GM23248 (cell line): ENCODE measurements at regions of chr9 and their contacts with region 1.

Region 1: GRCh38 chr9:126228781-126229444 is 97.7 kb upstream of the MVB12B start:
- DNase-seq: peak; percentile 84
- H3K4me3 ChIP-seq: no peak overlapping the region
- H3K27ac ChIP-seq: no peak overlapping the region
- H3K4me1 ChIP-seq: no peaks in the 10 kb centered on the region
- H3K27me3 ChIP-seq: peaks cover 24% of the 10 kb centered on the region

Region 2: DNA sequence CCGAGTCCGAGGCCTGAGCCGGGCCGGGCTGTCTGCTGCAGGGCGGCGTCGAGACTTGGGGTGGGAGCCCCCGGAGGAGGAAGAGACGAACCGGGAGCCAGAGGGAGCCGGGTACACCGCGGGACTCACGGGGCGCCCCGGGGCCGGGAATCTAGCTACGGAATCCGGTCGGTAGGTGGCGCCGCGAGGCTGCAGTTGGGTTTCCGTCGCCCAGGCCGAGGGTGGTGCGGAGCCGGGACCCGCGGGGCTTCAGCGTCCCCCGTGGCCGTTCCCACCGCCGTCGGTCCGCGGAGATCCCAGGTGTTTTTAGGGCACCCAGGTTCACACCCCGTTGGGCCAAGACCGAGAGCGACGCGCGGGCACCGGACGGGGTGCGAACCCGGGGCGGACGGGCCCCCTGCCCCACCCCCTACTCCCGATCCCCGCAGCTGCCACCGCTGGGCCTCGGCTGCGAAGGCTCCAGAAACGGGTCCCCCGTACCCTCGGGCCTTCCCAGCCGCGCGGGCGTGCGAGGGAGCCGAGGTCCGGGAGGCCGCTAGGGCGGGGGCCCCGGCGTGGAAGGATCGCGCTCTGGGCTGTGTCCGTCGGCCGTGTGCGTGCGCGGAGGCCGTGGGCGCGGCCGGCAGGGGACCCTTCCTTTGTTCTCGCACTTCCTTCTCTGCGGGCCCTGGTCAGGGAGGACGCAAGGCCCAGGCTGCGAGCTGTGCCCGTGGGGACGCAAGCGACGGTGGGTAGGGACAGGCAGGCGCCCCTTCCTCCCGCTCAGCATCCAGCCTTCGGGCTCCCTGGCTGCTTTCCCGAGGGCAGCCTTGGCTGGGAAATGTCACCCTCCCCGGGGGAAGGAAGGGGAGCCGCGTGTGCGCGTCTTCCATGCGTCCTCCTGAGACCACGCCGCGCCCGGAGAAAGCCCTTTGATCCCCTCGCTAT is 820.7 kb before region 1 on chr9:
- in situ Hi-C with region 1: loop called (anchors 10 kb)
- DNase-seq: peak; percentile 88
- H3K4me3 ChIP-seq: peak overlapping the region; percentile 73
- H3K27ac ChIP-seq: no peak overlapping the region
- H3K4me1 ChIP-seq: no peaks in the 10 kb centered on the region
- H3K27me3 ChIP-seq: no peaks in the 10 kb centered on the region

Region 3: DNA sequence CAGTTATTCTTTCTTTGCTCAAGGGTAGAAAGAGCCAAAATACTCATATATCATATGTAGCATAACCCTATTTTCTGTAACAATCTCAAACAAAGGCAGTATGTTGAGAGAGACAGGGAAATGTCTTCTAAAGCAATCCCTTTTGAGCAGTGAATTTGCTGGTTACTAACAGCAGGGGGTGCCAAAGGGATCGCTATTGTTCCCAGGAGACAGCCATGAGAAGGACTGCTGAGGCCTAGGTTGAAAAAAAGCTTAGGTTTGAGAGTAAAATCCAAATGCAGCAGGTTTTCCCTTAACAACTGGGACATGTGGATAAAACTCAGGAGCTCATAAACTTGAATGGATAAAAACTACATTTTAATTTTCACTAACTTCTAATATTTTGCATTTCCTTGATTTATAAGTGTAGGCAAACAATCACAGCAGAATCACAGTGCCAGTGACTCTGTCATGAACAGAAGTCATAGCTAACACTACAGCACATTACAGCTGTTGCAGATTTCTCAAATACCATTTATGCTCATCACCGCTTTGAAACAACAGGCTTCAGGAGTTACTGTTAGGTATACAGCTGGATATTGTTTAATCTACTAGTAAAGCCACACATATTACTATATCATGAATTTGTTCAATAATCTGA is 670.3 kb before region 1 on chr9:
- in situ Hi-C with region 1: loop called (anchors 25 kb)
- DNase-seq: peak; percentile 86
- H3K4me3 ChIP-seq: no peak overlapping the region
- H3K27ac ChIP-seq: peak overlapping the region; percentile 36
- H3K4me1 ChIP-seq: peaks cover 13% of the 10 kb centered on the region
- H3K27me3 ChIP-seq: no peaks in the 10 kb centered on the region

Region 4: GRCh38 chr9:127130661-127131538 is 902.0 kb after region 1 on chr9:
- in situ Hi-C with region 1: no loop called
- DNase-seq: peak; percentile 98
- H3K4me3 ChIP-seq: no peak overlapping the region
- H3K27ac ChIP-seq: peak overlapping the region; percentile 95
- H3K4me1 ChIP-seq: peaks cover 58% of the 10 kb centered on the region
- H3K27me3 ChIP-seq: no peaks in the 10 kb centered on the region